Breast epithelium (tissue), 4 donors: ENCODE measurements at regions of chr20 and their contacts with region 1.

Region 1: DNA sequence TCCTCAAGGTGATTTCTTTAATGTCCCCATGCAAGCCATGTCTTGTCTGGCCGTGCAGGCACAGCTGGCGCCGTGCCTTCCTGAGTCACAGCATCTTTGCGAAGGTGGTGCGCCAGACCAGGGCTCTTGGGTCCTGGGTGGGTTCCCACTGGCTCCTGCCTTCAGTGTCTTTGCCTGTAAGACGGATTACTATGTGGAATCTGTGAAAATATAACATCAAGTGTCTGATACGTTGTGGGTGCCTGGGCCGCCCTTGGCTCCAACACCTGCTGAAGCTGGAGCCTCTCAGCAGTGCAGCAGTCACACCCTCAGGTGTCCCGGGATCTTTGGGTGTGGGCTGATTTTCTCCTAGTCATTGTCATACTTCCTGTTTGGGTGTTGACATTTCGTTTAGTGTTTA is 3.2 kb downstream of the OSBPL2 start:
- DNase-seq: peak in 1 of 2 donors; percentile 33
- H3K4me3 ChIP-seq: no peak overlapping the region
- H3K27ac ChIP-seq: no peak overlapping the region
- H3K4me1 ChIP-seq: peaks cover 0 to 1% of the 10 kb centered on the region in 2 donors
- H3K27me3 ChIP-seq: no peaks in the 10 kb centered on the region
- CTCF ChIP-seq: no peak
- POLR2A ChIP-seq: no peak

Region 2: GRCh38 chr20:62318400-62319345 is 77.2 kb after region 1 on chr20:
- intact Hi-C with region 1: loop called (anchors 2 kb)
- DNase-seq: no peak
- H3K4me3 ChIP-seq: no peak overlapping the region
- H3K27ac ChIP-seq: no peak overlapping the region
- H3K4me1 ChIP-seq: no peaks in the 10 kb centered on the region
- H3K27me3 ChIP-seq: no peaks in the 10 kb centered on the region
- CTCF ChIP-seq: no peak
- POLR2A ChIP-seq: no peak